ENCODE measurements at regions of chr7 and their contacts with region 1.

Region 1: GRCh38 chr7:94295850-94296249 is 98.8 kb upstream of the COL1A2 start:
- DNase-seq: peak; percentile 85
- ATAC-seq: peak; percentile 57
- H3K4me3 ChIP-seq: peak overlapping the region; percentile 24; the same call in 1 of the 2 replicates
- H3K27ac ChIP-seq: peak overlapping the region; percentile 95; the same call in 1 of the 2 replicates
- H3K4me1 ChIP-seq: peaks cover 20% of the 10 kb centered on the region
- H3K27me3 ChIP-seq: no peaks in the 10 kb centered on the region
- CTCF ChIP-seq: peak; percentile 81
- POLR2A ChIP-seq: peak; percentile 36; the same call in 1 of the 2 replicates
- RAD21 ChIP-seq: peak; percentile 91

Region 2: DNA sequence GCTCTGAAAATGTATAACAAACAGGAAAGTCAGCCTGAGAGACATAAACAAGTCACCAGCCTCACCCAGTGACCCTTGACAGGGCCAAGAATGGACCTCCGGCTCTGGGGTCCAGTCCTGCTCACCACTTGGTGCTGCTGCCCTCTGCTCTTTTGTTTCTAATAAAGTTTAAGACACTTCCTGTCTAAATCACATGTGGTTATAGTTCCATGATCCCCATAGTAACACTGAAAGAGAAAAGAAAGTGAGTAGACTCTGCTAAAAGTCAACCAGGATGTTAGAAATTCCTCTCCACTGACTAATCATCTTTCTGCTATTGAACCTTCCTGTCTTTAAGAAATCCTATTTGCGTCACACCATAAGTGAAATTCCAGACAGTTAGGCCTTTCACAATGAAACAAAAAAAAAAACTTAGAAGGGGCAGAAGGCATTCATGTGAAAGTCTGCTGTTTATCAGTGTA is 112.5 kb before region 1 on chr7:
- CTCF ChIA-PET with region 1: no interaction called
- POLR2A ChIA-PET with region 1: no interaction called
- dilution Hi-C with region 1: no loop called
- in situ Hi-C with region 1: no loop called
- intact Hi-C with region 1: no loop called
- DNase-seq: peak; percentile 100
- ATAC-seq: peak; percentile 78
- H3K4me3 ChIP-seq: peak overlapping the region; percentile 31; the same call in 1 of the 2 replicates
- H3K27ac ChIP-seq: peak overlapping the region; percentile 97
- H3K4me1 ChIP-seq: peaks cover 8% of the 10 kb centered on the region; the same call in 1 of the 2 replicates
- H3K27me3 ChIP-seq: no peaks in the 10 kb centered on the region
- CTCF ChIP-seq: 0 out of 2 replicates have a peak, but pooled peaks have one; percentile 5
- POLR2A ChIP-seq: peak; percentile 54; the same call in 1 of the 2 replicates
- RAD21 ChIP-seq: no peak

Region 3: GRCh38 chr7:94250985-94251384 is 44.9 kb before region 1 on chr7:
- CTCF ChIA-PET with region 1: no interaction called
- POLR2A ChIA-PET with region 1: no interaction called
- dilution Hi-C with region 1: no loop called
- in situ Hi-C with region 1: no loop called
- intact Hi-C with region 1: no loop called
- DNase-seq: no peak
- ATAC-seq: no peak
- H3K4me3 ChIP-seq: no peak overlapping the region
- H3K27ac ChIP-seq: no peak overlapping the region
- H3K4me1 ChIP-seq: no peaks in the 10 kb centered on the region
- H3K27me3 ChIP-seq: peaks cover 2% of the 10 kb centered on the region; the same call in 1 of the 2 replicates
- CTCF ChIP-seq: no peak
- POLR2A ChIP-seq: no peak
- RAD21 ChIP-seq: no peak

Region 4: GRCh38 chr7:94374231-94374630 is 78.4 kb after region 1 on chr7:
- CTCF ChIA-PET with region 1: interaction called, 19 read pairs
- POLR2A ChIA-PET with region 1: interaction called, 79 read pairs
- dilution Hi-C with region 1: no loop called
- in situ Hi-C with region 1: no loop called
- intact Hi-C with region 1: loop called (anchors 1 kb)
- DNase-seq: peak; percentile 93
- ATAC-seq: peak; percentile 85
- H3K4me3 ChIP-seq: peak overlapping the region; percentile 41; the same call in 1 of the 2 replicates
- H3K27ac ChIP-seq: peak overlapping the region; percentile 100
- H3K4me1 ChIP-seq: peaks cover 13% of the 10 kb centered on the region
- H3K27me3 ChIP-seq: no peaks in the 10 kb centered on the region
- CTCF ChIP-seq: no peak; the same call in 1 of the 2 replicates
- POLR2A ChIP-seq: peak; percentile 90
- RAD21 ChIP-seq: peak; percentile 49

Region 5: GRCh38 chr7:94395141-94396036 is 99.5 kb after region 1 on chr7:
- CTCF ChIA-PET with region 1: interaction called, 31 read pairs
- POLR2A ChIA-PET with region 1: interaction called, 169 read pairs
- dilution Hi-C with region 1: no loop called
- in situ Hi-C with region 1: loop called (anchors 5 kb)
- intact Hi-C with region 1: loop called (anchors 1 kb)
- DNase-seq: peak; percentile 90
- ATAC-seq: 0 out of 2 replicates have a peak, but pooled peaks have one; percentile 0
- H3K4me3 ChIP-seq: peak overlapping the region; percentile 81
- H3K27ac ChIP-seq: peak overlapping the region; percentile 94
- H3K4me1 ChIP-seq: peaks cover 15% of the 10 kb centered on the region
- H3K27me3 ChIP-seq: no peaks in the 10 kb centered on the region
- CTCF ChIP-seq: peak; percentile 81
- POLR2A ChIP-seq: no peak
- RAD21 ChIP-seq: peak; percentile 91

Region 6: GRCh38 chr7:94423863-94424735 is 128.2 kb after region 1 on chr7:
- CTCF ChIA-PET with region 1: interaction called, 13 read pairs
- POLR2A ChIA-PET with region 1: interaction called, 17 read pairs
- dilution Hi-C with region 1: no loop called
- in situ Hi-C with region 1: no loop called
- intact Hi-C with region 1: no loop called
- DNase-seq: peak; percentile 88
- ATAC-seq: peak; percentile 38
- H3K4me3 ChIP-seq: no peak overlapping the region
- H3K27ac ChIP-seq: peak overlapping the region; percentile 100
- H3K4me1 ChIP-seq: peaks cover 16% of the 10 kb centered on the region
- H3K27me3 ChIP-seq: no peaks in the 10 kb centered on the region
- CTCF ChIP-seq: no peak
- POLR2A ChIP-seq: no peak
- RAD21 ChIP-seq: no peak